ENCODE measurements at regions of chr1 and their contacts with region 1.

Region 1: DNA sequence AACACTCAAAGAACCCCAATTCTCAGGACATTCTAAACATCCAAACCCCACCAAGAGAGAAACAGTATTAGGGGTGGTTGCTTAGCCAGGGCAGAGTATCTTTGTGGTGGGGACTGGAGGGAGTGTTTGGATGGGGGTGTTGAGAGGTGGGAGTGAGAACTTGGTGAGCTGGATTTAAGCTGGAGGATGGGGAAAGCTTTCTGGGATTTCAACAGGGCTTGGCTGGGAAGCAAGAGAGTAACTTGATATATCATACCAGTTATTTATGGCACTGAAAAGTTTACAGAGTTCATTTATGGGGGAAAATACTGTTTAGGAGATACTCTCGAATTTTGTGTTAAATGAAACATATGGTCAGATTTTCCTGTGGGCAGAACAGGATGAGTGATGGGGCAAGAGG is 6.8 kb upstream of the CNIH3 start:
- DNase-seq: peak in 1 of 2 donors; percentile 32
- H3K4me3 ChIP-seq: no peak overlapping the region
- CTCF ChIP-seq: no peak
- POLR2A ChIP-seq: no peak

Region 2: DNA sequence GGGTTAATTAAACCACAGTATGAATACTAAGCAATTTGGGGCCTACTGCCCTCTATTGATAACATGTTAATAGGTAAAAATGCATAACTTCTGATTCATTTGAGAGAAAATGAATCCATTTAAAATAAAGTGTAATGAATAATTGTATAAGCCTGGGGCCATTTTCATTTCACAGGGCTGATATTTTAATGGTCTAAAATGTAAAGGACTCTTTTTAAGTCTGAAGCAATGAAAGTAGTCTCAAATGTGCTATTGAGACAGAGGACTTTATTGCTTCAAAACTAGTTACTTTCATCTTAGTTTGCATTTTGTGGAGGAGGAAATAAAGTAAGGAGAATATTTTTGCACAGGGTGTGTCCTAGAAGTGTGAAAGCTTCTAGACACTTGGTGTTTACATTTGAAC is 1621.7 kb before region 1 on chr1:
- intact Hi-C with region 1: loop called (anchors 10 kb)
- DNase-seq: no peak
- H3K4me3 ChIP-seq: no peak overlapping the region
- CTCF ChIP-seq: no peak
- POLR2A ChIP-seq: no peak